ENCODE measurements at regions of chr1 and their contacts with region 1.

Region 1: DNA sequence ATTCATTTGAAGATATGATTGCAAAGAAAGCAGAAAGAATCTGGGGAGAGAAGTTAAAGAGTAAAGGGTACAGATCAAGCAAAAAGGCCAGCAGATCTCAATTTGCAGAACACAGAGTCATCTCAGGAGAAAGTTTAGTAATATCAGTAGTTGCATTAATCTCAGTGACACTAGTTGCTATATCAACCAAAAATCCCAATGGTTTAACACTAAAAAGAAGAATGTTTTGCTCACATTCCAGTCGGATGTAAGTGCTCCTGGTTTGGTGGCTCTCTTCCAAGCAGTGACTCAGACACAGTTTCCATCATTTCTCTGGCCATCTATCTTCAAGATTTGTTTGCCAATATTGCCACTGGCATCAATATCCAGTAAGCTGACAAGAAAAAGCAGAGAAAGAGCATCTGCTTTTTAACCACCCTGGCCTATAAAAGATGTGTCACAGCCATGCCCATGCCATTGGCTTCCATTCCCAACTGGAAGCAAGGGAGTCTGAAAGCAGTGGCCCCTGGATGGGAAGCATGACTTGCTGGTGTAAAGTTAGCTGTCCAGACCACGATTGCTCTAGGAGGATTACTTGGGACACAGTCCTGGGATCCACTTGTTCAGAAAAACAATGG is 45.5 kb upstream of the AIM2 start:
- DNase-seq: peak; percentile 36
- CTCF ChIP-seq: no peak

Region 2: DNA sequence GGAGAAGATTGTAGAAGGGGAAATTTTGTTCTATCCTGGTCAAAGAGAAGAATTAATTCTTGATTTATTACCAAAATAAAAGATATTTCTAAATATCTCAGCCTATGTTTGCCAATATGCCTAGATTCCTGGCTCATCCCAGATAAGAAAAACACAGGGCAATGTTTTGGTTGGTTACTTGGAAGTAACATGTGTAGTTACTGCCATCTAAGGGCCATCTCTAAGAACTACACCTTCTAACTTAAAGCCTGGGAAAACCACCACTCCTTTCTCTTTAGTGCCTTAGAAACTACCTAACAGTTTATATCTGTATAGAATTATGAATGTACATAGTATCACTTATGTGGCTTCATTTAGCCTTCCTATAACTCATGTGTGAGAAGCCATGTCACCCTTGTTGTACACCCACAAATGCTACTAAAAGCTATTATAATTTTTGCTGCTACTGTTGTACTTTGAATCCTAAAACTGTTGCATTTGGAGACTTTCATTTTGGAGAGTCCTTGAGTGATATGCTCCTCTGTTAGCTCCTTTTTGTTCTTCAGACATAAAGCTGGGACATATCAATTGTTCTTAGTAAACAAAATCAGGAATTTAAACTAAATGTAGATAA is 50.0 kb before region 1 on chr1:
- CTCF ChIA-PET with region 1: no interaction called
- POLR2A ChIA-PET with region 1: no interaction called
- DNase-seq: peak; percentile 34
- CTCF ChIP-seq: peak; percentile 55

Region 3: GRCh38 chr1:159132271-159132881 is 10.3 kb after region 1 on chr1:
- CTCF ChIA-PET with region 1: interaction called, 23 read pairs
- POLR2A ChIA-PET with region 1: no interaction called
- DNase-seq: peak; percentile 59
- CTCF ChIP-seq: peak; percentile 83